Right cardiac atrium (tissue), 5 donors: ENCODE measurements at regions of chr3 and their contacts with region 1.

Region 1: GRCh38 chr3:157174649-157175498 is 14.9 kb upstream of the CCNL1 start:
- DNase-seq: peak; percentile 99 to 100 (median 100)
- ATAC-seq: peak; percentile 98
- H3K4me3 ChIP-seq: peak overlapping the region; percentile 92
- H3K27ac ChIP-seq: peak overlapping the region; percentile 98
- H3K4me1 ChIP-seq: no peaks in the 10 kb centered on the region
- H3K27me3 ChIP-seq: no peaks in the 10 kb centered on the region

Region 2: GRCh38 chr3:156554842-156555687 is 619.8 kb before region 1 on chr3 and contains the start of gene SSR3:
- intact Hi-C with region 1: no loop called
- DNase-seq: peak; percentile 100
- ATAC-seq: peak; percentile 100
- H3K4me3 ChIP-seq: peak within 1 kb of the TSS; percentile 77
- H3K27ac ChIP-seq: peak within 1 kb of the TSS; percentile 96
- H3K4me1 ChIP-seq: peaks cover 3% of the 10 kb centered on the region
- H3K27me3 ChIP-seq: no peaks in the 10 kb centered on the region
- total RNA-seq, gene SSR3: 139 to 171 (median 144) TPM

Region 3: DNA sequence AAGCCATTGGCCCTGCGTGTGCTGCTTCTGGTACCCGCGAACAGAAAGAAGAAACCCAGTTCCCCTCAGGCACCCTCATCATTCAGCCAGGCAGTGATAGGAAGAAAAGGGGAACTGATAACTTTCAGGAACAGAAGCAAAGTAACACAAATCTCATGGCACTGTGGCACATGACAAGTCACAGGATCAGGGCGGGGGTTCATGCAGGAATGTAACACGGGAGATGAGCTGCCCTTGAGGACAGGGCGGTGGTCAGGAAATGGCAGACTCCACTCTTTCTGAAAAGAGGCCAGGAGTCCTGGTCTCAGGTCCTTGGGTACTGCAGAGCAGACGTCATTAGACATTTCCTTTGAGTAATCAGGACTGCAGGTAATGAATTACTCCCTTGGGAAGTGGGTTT is 110.5 kb before region 1 on chr3:
- intact Hi-C with region 1: no loop called
- DNase-seq: peak in 1 of 3 donors; percentile 39
- ATAC-seq: peak in 1 of 2 donors; percentile 38
- H3K4me3 ChIP-seq: no peak overlapping the region
- H3K27ac ChIP-seq: no peak overlapping the region
- H3K4me1 ChIP-seq: no peaks in the 10 kb centered on the region
- H3K27me3 ChIP-seq: no peaks in the 10 kb centered on the region

Region 4: DNA sequence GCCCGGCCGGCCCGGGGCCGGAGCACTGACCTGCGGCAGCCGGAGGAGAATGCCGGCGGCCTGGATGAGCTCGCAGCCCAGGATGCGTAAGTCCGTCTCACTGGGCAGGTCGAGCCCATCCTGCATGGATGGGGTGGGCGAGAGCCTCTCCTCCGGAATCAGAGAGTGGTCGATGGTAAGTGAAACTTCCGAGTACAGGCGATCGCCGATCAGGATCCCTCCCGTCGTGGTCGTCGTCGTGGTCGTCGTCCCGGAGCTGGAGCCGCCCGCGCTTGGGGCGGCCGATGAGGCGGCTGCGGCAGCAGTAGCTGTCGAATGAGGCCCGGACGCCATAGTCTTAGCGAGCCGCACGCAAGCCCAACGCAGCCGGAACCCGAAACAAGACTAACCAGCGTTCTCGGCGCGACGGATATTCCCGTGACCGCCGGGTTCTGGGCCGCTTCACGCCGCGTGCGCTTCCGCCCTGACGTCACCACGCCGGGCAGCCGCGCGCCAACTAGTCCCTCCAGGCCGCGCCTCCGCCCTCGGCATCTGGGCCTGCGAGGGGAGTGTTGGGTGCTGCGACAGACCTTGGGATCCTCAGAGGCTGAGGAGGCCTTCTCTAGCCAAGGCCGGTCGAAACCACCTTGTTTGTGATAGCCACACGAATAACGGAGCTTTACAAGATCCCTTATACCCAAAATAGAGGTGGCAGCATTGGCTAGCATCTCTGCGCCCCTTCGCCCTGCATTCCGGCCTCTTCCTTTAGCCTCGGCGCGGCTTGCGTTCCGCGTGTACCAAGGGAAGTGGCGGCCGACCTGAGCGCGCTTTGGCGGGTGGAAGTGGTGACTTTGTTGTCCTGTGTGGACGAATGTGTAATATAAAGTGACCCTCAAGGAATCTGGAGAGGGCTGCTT is 14.9 kb before region 1 on chr3 and contains the start of gene CCNL1:
- intact Hi-C with region 1: loop called in 3 of 4 experiments (anchors 2 kb)
- DNase-seq: peak; percentile 97 to 99 (median 99)
- ATAC-seq: peak; percentile 96 to 97
- H3K4me3 ChIP-seq: peak within 1 kb of the TSS; percentile 95
- H3K27ac ChIP-seq: peak within 1 kb of the TSS; percentile 100
- H3K4me1 ChIP-seq: no peaks in the 10 kb centered on the region
- H3K27me3 ChIP-seq: no peaks in the 10 kb centered on the region
- total RNA-seq, gene CCNL1: 30.1 to 60.6 (median 41.2) TPM

Region 5: GRCh38 chr3:158109804-158110657 is 935.2 kb after region 1 on chr3 and contains the start of gene RSRC1:
- intact Hi-C with region 1: loop called in 1 of 4 experiments (anchors 5 kb)
- DNase-seq: peak; percentile 87 to 94 (median 91)
- ATAC-seq: peak; percentile 89 to 92
- H3K4me3 ChIP-seq: peak within 1 kb of the TSS; percentile 52
- H3K27ac ChIP-seq: peak within 1 kb of the TSS; percentile 15
- H3K4me1 ChIP-seq: no peaks in the 10 kb centered on the region
- H3K27me3 ChIP-seq: no peaks in the 10 kb centered on the region
- total RNA-seq, gene RSRC1: 28.0 to 31.0 (median 29.3) TPM